ENCODE measurements at regions of chr9 and their contacts with region 1.

Region 1: GRCh38 chr9:81344366-81344765 is 345.0 kb downstream of the TLE1 start:
- DNase-seq: no peak
- H3K4me3 ChIP-seq: no peak overlapping the region
- CTCF ChIP-seq: no peak
- POLR2A ChIP-seq: no peak

Region 2: DNA sequence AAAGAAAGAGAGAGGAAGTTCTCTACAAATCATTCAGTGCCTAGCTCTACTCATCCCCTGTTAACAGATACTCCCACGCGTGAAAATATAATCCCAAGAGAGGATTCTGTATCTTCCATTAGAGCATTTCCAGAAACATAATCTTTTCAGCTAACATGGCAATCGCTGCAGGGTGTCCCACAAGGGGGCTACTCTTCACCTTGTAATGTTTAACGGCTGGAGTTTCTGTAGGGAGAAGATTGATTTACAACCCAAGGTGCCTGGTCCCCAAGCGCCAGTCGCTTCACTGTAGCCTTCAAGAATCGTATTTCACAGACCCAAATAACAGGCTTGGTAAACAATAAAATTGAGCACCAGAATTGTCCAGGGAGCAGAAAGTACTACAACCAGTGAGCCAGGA is 26.3 kb after region 1 on chr9:
- intact Hi-C with region 1: loop called (anchors 1 kb)
- DNase-seq: no peak
- H3K4me3 ChIP-seq: no peak overlapping the region
- CTCF ChIP-seq: no peak
- POLR2A ChIP-seq: no peak